PC-3 (cell line): ENCODE measurements at regions of chr10 and their contacts with region 1.

Region 1: GRCh38 chr10:110918643-110919363 is at the start of gene BBIP1:
- DNase-seq: peak; percentile 98
- ATAC-seq: peak; percentile 83
- H3K4me3 ChIP-seq: peak within 1 kb of the TSS; percentile 83
- H3K27ac ChIP-seq: peak within 1 kb of the TSS; percentile 85
- H3K4me1 ChIP-seq: peaks cover 36% of the 10 kb centered on the region
- H3K27me3 ChIP-seq: no peaks in the 10 kb centered on the region
- CTCF ChIP-seq: no peak
- total RNA-seq, gene BBIP1: 12.0 and 19.6 TPM in 2 replicates

Region 2: DNA sequence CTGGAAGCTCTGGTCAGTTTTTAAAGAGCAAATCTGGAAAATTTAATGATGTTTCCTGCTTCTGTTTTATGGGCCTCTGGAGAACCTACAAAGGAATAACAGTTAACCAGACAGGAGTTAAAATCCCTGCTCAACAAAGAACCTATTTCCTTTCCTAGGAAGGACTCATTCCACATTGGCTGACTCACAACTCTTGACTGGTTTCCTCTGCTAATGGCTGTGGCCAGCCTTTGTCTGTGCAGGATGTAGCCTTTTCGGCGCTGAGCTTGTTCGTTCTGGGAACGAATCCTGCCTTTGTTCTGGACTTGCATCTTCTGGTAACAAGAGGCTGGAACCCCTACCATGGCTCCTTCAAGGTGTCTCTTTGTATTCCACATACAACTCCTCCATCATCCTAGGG is 159.9 kb before region 1 on chr10:
- CTCF ChIA-PET with region 1: no interaction called
- POLR2A ChIA-PET with region 1: interaction called, 17 read pairs
- intact Hi-C with region 1: no loop called
- DNase-seq: peak; percentile 75
- ATAC-seq: peak; percentile 95
- H3K4me3 ChIP-seq: no peak overlapping the region
- H3K27ac ChIP-seq: peak overlapping the region; percentile 9; the same call in 1 of the 2 replicates
- H3K4me1 ChIP-seq: peaks cover 18% of the 10 kb centered on the region
- H3K27me3 ChIP-seq: no peaks in the 10 kb centered on the region
- CTCF ChIP-seq: no peak

Region 3: GRCh38 chr10:110883924-110884323 is 34.9 kb before region 1 on chr10:
- CTCF ChIA-PET with region 1: no interaction called
- POLR2A ChIA-PET with region 1: interaction called, 10 read pairs
- intact Hi-C with region 1: loop called (anchors 5 kb)
- DNase-seq: peak; percentile 67
- ATAC-seq: peak; percentile 84
- H3K4me3 ChIP-seq: peak overlapping the region; percentile 62
- H3K27ac ChIP-seq: peak overlapping the region; percentile 80
- H3K4me1 ChIP-seq: peaks cover 38% of the 10 kb centered on the region
- H3K27me3 ChIP-seq: no peaks in the 10 kb centered on the region
- CTCF ChIP-seq: no peak

Region 4: GRCh38 chr10:111004016-111004415 is 85.2 kb after region 1 on chr10:
- CTCF ChIA-PET with region 1: no interaction called
- POLR2A ChIA-PET with region 1: no interaction called
- intact Hi-C with region 1: loop called (anchors 5 kb)
- DNase-seq: no peak
- ATAC-seq: peak; percentile 35; the same call in 1 of the 2 replicates
- H3K4me3 ChIP-seq: no peak overlapping the region
- H3K27ac ChIP-seq: no peak overlapping the region
- H3K4me1 ChIP-seq: peaks cover 23% of the 10 kb centered on the region
- H3K27me3 ChIP-seq: no peaks in the 10 kb centered on the region
- CTCF ChIP-seq: no peak